ENCODE measurements at regions of chr16 and their contacts with region 1.

Region 1: DNA sequence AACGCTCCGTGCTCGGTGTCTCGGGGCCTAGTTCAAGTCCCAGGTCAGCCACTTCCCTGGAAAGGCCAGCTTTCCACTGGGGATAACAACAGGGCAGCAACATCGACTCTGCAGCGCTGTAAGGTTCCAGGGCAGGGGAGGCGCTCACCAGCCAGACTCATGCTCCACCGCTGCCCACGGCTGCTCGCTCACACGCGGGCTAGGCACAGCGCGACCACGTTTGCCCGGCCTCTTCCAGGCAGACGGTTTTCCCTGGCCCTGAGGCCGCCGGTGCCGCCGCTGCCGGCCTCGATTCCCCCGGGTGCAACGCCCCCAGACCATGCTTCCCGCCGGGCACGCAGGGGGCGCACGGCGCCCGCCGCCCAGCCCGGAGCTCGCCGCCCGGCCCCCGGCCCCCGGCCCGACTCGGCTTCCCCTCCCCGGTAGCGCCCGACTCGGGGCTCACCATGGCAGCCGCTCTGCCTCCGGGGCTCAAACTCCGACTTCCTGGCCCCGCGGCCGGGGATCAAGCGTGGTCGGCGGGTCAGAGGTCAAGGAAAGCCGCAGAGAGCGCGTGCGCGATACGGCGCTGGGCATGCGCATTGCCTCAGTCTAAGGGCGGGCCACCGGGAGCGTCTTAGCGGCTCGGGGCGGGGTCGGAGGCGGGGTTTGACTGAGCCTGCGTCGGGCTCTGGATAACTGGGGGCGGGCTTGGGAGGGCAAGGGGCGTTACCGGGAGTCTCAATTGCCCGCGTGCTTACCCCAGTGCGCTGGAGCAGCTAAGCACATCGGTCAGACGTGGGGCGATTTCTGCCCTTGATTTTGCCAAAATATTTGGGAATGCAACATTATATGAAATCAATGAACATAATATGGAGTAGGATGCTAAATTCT is at the start of gene PAM16:
- DNase-seq: peak; percentile 95 to 99 (median 97)
- H3K4me3 ChIP-seq: peak within 1 kb of the TSS; percentile 73 to 92
- H3K4me3 Mint-ChIP-seq: peak within 1 kb of the TSS; percentile 91 to 97 (median 94)
- H3K27ac ChIP-seq: peak within 1 kb of the TSS; percentile 79
- H3K27ac Mint-ChIP-seq: peak within 1 kb of the TSS; percentile 92 to 97 (median 94)
- H3K4me1 ChIP-seq: peaks cover 27% of the 10 kb centered on the region
- H3K4me1 Mint-ChIP-seq: peaks cover 16 to 43% (median 24%) of the 10 kb centered on the region in 4 donors
- H3K27me3 ChIP-seq: no peaks in the 10 kb centered on the region
- H3K27me3 Mint-ChIP-seq: no peaks in the 10 kb centered on the region
- total RNA-seq, gene PAM16: 38.6 to 54.8 TPM

Region 2: GRCh38 chr16:4271176-4272066 is 79.6 kb before region 1 on chr16:
- CTCF ChIA-PET with region 1: no interaction called
- POLR2A ChIA-PET with region 1: interaction called, 20 read pairs
- intact Hi-C with region 1: loop called (anchors 2 kb)
- DNase-seq: peak; percentile 84 to 94 (median 85)
- H3K4me3 ChIP-seq: peak overlapping the region; percentile 48 to 91
- H3K4me3 Mint-ChIP-seq: peak overlapping the region; percentile 86 to 93 (median 91)
- H3K27ac ChIP-seq: peak overlapping the region; percentile 71
- H3K27ac Mint-ChIP-seq: peak overlapping the region; percentile 72 to 98 (median 91)
- H3K4me1 ChIP-seq: peaks cover 10% of the 10 kb centered on the region
- H3K4me1 Mint-ChIP-seq: peaks cover 6 to 27% (median 14%) of the 10 kb centered on the region in 4 donors
- H3K27me3 ChIP-seq: no peaks in the 10 kb centered on the region
- H3K27me3 Mint-ChIP-seq: no peaks in the 10 kb centered on the region

Region 3: GRCh38 chr16:4339909-4340308 is 11.1 kb before region 1 on chr16:
- CTCF ChIA-PET with region 1: no interaction called
- POLR2A ChIA-PET with region 1: interaction called, 10 read pairs
- intact Hi-C with region 1: no loop called
- DNase-seq: no peak
- H3K4me3 ChIP-seq: no peak overlapping the region
- H3K4me3 Mint-ChIP-seq: no peak overlapping the region
- H3K27ac ChIP-seq: no peak overlapping the region
- H3K27ac Mint-ChIP-seq: no peak overlapping the region
- H3K4me1 ChIP-seq: no peaks in the 10 kb centered on the region
- H3K4me1 Mint-ChIP-seq: peaks cover 2 to 10% (median 4%) of the 10 kb centered on the region in 4 donors
- H3K27me3 ChIP-seq: no peaks in the 10 kb centered on the region
- H3K27me3 Mint-ChIP-seq: no peaks in the 10 kb centered on the region

Region 4: DNA sequence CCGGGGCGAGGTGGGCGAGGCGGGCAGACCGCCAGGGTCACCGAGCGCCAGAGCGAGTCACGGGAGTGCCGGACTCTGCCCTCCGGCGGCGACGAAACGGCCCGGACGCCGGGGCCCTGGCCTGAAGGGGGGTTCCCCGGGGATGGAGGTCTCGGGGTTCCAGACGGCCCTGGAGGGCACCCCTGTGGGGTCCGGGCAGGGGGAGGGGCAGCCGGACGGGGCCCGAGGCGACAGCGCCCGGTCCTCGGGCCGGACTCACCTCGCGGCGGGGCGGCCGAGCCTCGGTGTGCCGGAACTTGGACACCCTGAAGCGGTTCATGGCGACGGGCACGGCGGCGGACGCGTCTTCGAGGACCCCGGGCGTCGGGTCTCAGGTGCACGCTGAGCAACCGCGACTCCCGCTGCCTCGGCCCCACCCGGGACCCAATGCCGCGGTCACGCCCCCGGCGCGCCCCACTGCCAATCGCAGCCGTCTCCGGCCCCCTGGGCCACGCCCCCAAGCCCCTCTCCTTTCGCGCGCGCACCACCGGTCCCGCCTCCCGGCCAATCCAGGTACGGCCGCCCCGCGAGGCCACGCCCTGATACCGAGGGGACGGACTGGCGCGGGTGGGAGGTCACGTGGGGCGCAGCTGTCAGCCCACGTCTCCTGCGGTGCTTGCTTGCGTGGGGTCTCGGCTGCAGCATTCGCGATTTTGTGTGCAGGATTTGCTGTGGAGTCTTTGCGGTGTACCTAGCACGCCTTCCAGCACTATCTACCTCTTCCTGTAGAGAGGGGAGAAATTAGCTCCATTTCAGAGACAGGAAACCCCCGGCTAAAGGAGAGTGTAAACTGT is 65.4 kb after region 1 on chr16 and contains the start of gene CORO7:
- CTCF ChIA-PET with region 1: no interaction called
- POLR2A ChIA-PET with region 1: interaction called, 11 read pairs
- intact Hi-C with region 1: loop called (anchors 1 kb)
- DNase-seq: peak; percentile 99 to 100 (median 100)
- H3K4me3 ChIP-seq: peak within 1 kb of the TSS; percentile 75 to 81
- H3K4me3 Mint-ChIP-seq: peak within 1 kb of the TSS; percentile 91 to 99 (median 98)
- H3K27ac ChIP-seq: peak within 1 kb of the TSS; percentile 95
- H3K27ac Mint-ChIP-seq: peak within 1 kb of the TSS; percentile 94 to 100 (median 99)
- H3K4me1 ChIP-seq: peaks cover 38% of the 10 kb centered on the region
- H3K4me1 Mint-ChIP-seq: peaks cover 26 to 49% (median 37%) of the 10 kb centered on the region in 4 donors
- H3K27me3 ChIP-seq: no peaks in the 10 kb centered on the region
- H3K27me3 Mint-ChIP-seq: no peaks in the 10 kb centered on the region
- total RNA-seq, gene CORO7: 176 to 184 TPM

Region 5: GRCh38 chr16:4431023-4431422 is 80.0 kb after region 1 on chr16:
- CTCF ChIA-PET with region 1: no interaction called
- POLR2A ChIA-PET with region 1: no interaction called
- intact Hi-C with region 1: no loop called
- DNase-seq: no peak
- H3K4me3 ChIP-seq: no peak overlapping the region
- H3K4me3 Mint-ChIP-seq: no peak overlapping the region
- H3K27ac ChIP-seq: no peak overlapping the region
- H3K27ac Mint-ChIP-seq: peak overlapping the region in 3 of 7 donors; percentile 12 to 76 (median 41)
- H3K4me1 ChIP-seq: peaks cover 22% of the 10 kb centered on the region
- H3K4me1 Mint-ChIP-seq: peaks cover 16 to 34% (median 22%) of the 10 kb centered on the region in 4 donors
- H3K27me3 ChIP-seq: no peaks in the 10 kb centered on the region
- H3K27me3 Mint-ChIP-seq: no peaks in the 10 kb centered on the region

Region 6: DNA sequence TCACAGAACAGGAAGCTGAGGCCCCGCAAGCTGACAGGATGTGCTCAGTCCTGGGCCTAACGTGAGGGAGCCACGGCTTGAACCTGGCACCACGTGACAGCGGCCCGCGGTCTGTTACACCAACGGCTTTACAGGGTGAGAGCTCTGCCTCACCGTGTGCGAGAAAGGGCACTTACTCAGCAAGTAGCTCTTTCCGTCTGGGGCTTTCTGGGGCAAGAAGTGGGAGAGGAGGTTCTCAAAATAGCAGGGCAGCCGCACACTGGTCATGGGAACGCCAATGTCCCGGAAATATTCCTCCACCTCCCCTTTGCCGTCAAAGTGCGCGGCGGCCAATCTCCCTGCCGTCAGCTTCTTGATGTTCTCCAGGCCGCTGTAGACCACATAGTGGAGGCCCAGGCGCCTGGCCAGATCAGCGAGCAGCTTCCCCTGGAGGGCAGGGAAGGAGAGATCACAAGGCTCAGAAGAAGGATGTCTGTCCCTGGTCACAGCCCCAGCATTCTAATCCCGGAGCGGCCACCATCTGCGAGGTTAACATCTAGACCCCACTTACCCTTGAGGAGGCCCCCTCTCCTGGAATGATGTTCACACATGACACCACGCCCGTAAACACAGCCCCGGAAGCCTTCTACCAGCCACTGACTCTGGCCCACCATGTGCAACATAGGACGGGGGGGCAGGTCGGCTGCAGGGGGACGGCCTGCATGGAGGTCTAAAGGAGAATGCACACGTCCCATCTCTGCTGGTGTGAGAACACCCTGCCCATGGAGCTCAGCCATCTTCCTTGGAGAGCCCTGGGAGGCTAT is 115.2 kb after region 1 on chr16:
- CTCF ChIA-PET with region 1: no interaction called
- POLR2A ChIA-PET with region 1: no interaction called
- intact Hi-C with region 1: no loop called
- DNase-seq: peak; percentile 50 to 77 (median 67)
- H3K4me3 ChIP-seq: no peak overlapping the region
- H3K4me3 Mint-ChIP-seq: peak overlapping the region; percentile 3 to 71 (median 60)
- H3K27ac ChIP-seq: peak overlapping the region; percentile 54
- H3K27ac Mint-ChIP-seq: peak overlapping the region; percentile 72 to 94 (median 91)
- H3K4me1 ChIP-seq: peaks cover 23% of the 10 kb centered on the region
- H3K4me1 Mint-ChIP-seq: peaks cover 15 to 24% (median 20%) of the 10 kb centered on the region in 4 donors
- H3K27me3 ChIP-seq: no peaks in the 10 kb centered on the region
- H3K27me3 Mint-ChIP-seq: no peaks in the 10 kb centered on the region

Region 7: DNA sequence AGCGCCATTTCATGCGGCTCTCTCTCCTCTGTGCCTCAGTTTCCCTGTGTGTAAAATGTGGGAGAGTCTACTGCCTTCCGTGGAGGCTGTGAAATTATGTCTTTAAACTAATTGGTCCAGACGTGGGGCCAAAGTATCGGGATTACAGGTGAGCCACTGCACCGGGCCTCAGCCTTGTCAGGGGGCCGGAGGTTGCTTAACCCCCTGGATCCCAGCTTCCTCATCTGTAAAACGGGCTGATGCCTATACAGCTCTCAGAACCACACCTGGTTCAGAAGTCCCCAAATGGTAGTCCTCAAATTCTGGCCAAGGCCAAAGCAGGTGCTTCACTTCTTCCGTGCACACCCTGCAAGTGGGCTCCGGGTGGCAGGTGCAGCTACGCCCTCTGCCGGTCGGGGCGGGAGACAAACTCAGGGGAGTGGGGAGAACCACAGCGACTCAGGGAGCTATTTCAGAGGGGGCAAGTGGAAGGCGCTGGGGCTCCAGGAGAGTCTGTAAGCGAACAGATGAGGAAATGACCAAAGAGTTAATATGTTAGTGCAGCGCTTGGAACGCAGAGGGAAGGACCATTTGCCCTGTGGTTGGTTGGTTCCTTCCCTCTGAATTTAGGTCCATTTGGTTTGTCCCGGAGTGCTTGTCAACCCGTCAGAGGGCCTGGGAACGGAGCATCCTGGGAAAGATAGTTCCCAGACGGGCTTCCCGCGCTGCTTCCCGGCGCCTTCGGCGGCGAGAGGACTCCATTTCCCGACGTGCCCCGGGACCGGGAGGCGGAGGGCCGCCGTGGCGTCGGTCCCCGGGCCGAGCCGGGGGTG is 273.2 kb after region 1 on chr16 and contains the start of gene MGRN1:
- CTCF ChIA-PET with region 1: no interaction called
- POLR2A ChIA-PET with region 1: no interaction called
- intact Hi-C with region 1: no loop called
- DNase-seq: peak; percentile 93 to 95 (median 94)
- H3K4me3 ChIP-seq: peak within 1 kb of the TSS; percentile 38 to 81
- H3K4me3 Mint-ChIP-seq: peak within 1 kb of the TSS; percentile 92 to 99 (median 95)
- H3K27ac ChIP-seq: peak within 1 kb of the TSS; percentile 94
- H3K27ac Mint-ChIP-seq: peak within 1 kb of the TSS; percentile 92 to 100 (median 99)
- H3K4me1 ChIP-seq: peaks cover 25% of the 10 kb centered on the region
- H3K4me1 Mint-ChIP-seq: peaks cover 20 to 46% (median 34%) of the 10 kb centered on the region in 4 donors
- H3K27me3 ChIP-seq: no peaks in the 10 kb centered on the region
- H3K27me3 Mint-ChIP-seq: no peaks in the 10 kb centered on the region
- total RNA-seq, gene MGRN1: 62.2 to 64.1 TPM

Region 8: DNA sequence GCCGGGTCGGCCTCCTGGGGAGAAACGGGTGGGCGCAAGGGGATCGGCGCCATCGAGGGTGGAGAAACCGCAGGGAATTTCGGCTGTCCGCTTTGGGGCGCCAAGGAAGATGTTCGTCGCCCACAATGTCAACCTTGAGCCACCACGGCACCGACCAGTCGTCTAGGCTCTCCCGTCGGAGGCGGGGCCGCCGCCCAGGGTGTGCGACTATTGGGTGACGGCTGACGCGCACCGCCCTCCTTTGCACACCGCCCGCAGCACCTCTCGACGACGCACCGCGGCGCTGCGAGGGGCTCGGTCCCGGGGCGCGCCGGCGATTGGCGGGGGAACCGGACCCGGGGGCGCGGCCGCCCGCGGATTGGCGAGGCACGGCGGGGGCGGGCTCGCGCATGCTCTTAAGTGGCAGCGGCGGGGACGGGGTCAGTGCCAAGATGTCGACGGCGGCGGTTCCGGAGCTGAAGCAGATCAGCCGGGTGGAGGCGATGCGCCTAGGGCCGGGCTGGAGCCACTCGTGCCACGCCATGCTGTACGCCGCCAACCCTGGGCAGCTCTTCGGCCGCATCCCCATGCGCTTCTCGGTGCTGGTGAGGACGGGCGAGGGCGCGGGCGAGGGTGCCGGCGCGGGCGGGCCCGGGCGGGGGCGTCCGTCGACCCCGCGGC is 342.4 kb after region 1 on chr16 and contains the start of gene NUDT16L1:
- CTCF ChIA-PET with region 1: no interaction called
- POLR2A ChIA-PET with region 1: no interaction called
- intact Hi-C with region 1: loop called (anchors 1 kb)
- DNase-seq: peak; percentile 94 to 99 (median 98)
- H3K4me3 ChIP-seq: peak within 1 kb of the TSS; percentile 61 to 81
- H3K4me3 Mint-ChIP-seq: peak within 1 kb of the TSS; percentile 85 to 92 (median 88)
- H3K27ac ChIP-seq: peak within 1 kb of the TSS; percentile 81
- H3K27ac Mint-ChIP-seq: peak within 1 kb of the TSS; percentile 84 to 93 (median 91)
- H3K4me1 ChIP-seq: peaks cover 21% of the 10 kb centered on the region
- H3K4me1 Mint-ChIP-seq: peaks cover 2 to 22% (median 9%) of the 10 kb centered on the region in 4 donors
- H3K27me3 ChIP-seq: no peaks in the 10 kb centered on the region
- H3K27me3 Mint-ChIP-seq: no peaks in the 10 kb centered on the region
- total RNA-seq, gene NUDT16L1: 52.4 to 53.7 TPM

Region 9: GRCh38 chr16:4801953-4802658 is 451.1 kb after region 1 on chr16 and contains the start of gene ROGDI:
- CTCF ChIA-PET with region 1: no interaction called
- POLR2A ChIA-PET with region 1: no interaction called
- intact Hi-C with region 1: no loop called
- DNase-seq: peak; percentile 86 to 93 (median 90)
- H3K4me3 ChIP-seq: peak within 1 kb of the TSS; percentile 52 to 58
- H3K4me3 Mint-ChIP-seq: peak within 1 kb of the TSS; percentile 84 to 95 (median 88)
- H3K27ac ChIP-seq: peak within 1 kb of the TSS; percentile 72
- H3K27ac Mint-ChIP-seq: peak within 1 kb of the TSS; percentile 88 to 97 (median 90)
- H3K4me1 ChIP-seq: peaks cover 18% of the 10 kb centered on the region
- H3K4me1 Mint-ChIP-seq: peaks cover 1 to 25% (median 11%) of the 10 kb centered on the region in 4 donors
- H3K27me3 ChIP-seq: no peaks in the 10 kb centered on the region
- H3K27me3 Mint-ChIP-seq: no peaks in the 10 kb centered on the region
- total RNA-seq, gene ROGDI: 9.7 to 9.9 TPM